ENCODE measurements at regions of chr16 and their contacts with region 1.

Region 1: GRCh38 chr16:24010440-24011089 is 174.8 kb downstream of the PRKCB start:
- DNase-seq: peak; percentile 91
- ATAC-seq: peak; percentile 26
- H3K4me3 ChIP-seq: peak overlapping the region in 1 of 5 experiments; percentile 30
- H3K4me3 Mint-ChIP-seq: peak overlapping the region; percentile 80
- H3K27ac ChIP-seq: peak overlapping the region; percentile 5 to 17
- H3K27ac Mint-ChIP-seq: peak overlapping the region; percentile 90
- H3K4me1 ChIP-seq: peaks cover 95 to 100% of the 10 kb centered on the region in 2 donors
- H3K4me1 Mint-ChIP-seq: peaks cover 97% of the 10 kb centered on the region
- H3K27me3 ChIP-seq: no peaks in the 10 kb centered on the region
- H3K27me3 Mint-ChIP-seq: no peaks in the 10 kb centered on the region
- CTCF ChIP-seq: peak; percentile 91

Region 2: GRCh38 chr16:23826528-23827045 is 184.0 kb before region 1 on chr16:
- CTCF ChIA-PET with region 1: interaction called, 15 read pairs
- POLR2A ChIA-PET with region 1: no interaction called
- intact Hi-C with region 1: no loop called
- DNase-seq: peak; percentile 84
- ATAC-seq: peak; percentile 91
- H3K4me3 ChIP-seq: peak overlapping the region in 3 of 5 experiments; percentile 10 to 34 (median 16)
- H3K4me3 Mint-ChIP-seq: peak overlapping the region; percentile 77
- H3K27ac ChIP-seq: peak overlapping the region; percentile 38 to 62
- H3K27ac Mint-ChIP-seq: peak overlapping the region; percentile 84
- H3K4me1 ChIP-seq: peaks cover 25 to 26% of the 10 kb centered on the region in 2 donors
- H3K4me1 Mint-ChIP-seq: peaks cover 28% of the 10 kb centered on the region
- H3K27me3 ChIP-seq: no peaks in the 10 kb centered on the region
- H3K27me3 Mint-ChIP-seq: no peaks in the 10 kb centered on the region
- CTCF ChIP-seq: no peak

Region 3: DNA sequence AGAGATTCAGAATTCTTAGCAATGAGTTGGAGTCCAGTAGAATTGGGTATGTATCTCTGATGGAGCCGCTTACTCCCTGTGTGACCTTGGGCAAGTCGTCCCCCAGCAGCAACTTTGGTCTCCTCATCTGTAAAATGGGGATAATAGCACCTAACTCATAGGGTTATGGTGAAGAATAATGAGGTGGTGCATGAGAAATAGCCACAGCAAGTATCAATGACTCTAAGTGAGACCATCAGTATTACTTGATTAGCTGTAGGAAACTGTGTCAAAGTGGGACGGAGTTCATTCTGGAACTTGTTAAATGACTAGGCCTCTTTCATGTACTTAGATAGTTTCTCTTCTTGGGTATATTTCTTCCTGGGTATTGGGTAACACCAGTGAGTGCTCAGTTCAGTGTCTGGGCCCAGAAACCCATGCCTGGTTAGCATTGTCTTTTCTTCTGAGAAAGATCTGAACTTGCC is 168.4 kb before region 1 on chr16:
- CTCF ChIA-PET with region 1: interaction called, 11 read pairs
- POLR2A ChIA-PET with region 1: interaction called, 3 read pairs
- intact Hi-C with region 1: no loop called
- DNase-seq: no peak
- ATAC-seq: no peak
- H3K4me3 ChIP-seq: no peak overlapping the region
- H3K4me3 Mint-ChIP-seq: peak overlapping the region; percentile 42
- H3K27ac ChIP-seq: peak overlapping the region; percentile 20 to 67
- H3K27ac Mint-ChIP-seq: peak overlapping the region; percentile 85
- H3K4me1 ChIP-seq: peaks cover 71 to 75% of the 10 kb centered on the region in 2 donors
- H3K4me1 Mint-ChIP-seq: peaks cover 79% of the 10 kb centered on the region
- H3K27me3 ChIP-seq: no peaks in the 10 kb centered on the region
- H3K27me3 Mint-ChIP-seq: no peaks in the 10 kb centered on the region
- CTCF ChIP-seq: no peak

Region 4: GRCh38 chr16:23877107-23878090 is 133.2 kb before region 1 on chr16:
- CTCF ChIA-PET with region 1: interaction called, 267 read pairs
- POLR2A ChIA-PET with region 1: interaction called, 23 read pairs
- intact Hi-C with region 1: loop called (anchors 1 kb)
- DNase-seq: peak; percentile 39
- ATAC-seq: peak; percentile 52
- H3K4me3 ChIP-seq: no peak overlapping the region
- H3K4me3 Mint-ChIP-seq: peak overlapping the region; percentile 2
- H3K27ac ChIP-seq: peak overlapping the region; percentile 34 to 77
- H3K27ac Mint-ChIP-seq: peak overlapping the region; percentile 93
- H3K4me1 ChIP-seq: peaks cover 82 to 94% of the 10 kb centered on the region in 2 donors
- H3K4me1 Mint-ChIP-seq: peaks cover 89% of the 10 kb centered on the region
- H3K27me3 ChIP-seq: no peaks in the 10 kb centered on the region
- H3K27me3 Mint-ChIP-seq: no peaks in the 10 kb centered on the region
- CTCF ChIP-seq: peak; percentile 34

Region 5: GRCh38 chr16:23959072-23959751 is 51.4 kb before region 1 on chr16:
- CTCF ChIA-PET with region 1: interaction called, 45 read pairs
- POLR2A ChIA-PET with region 1: interaction called, 9 read pairs
- intact Hi-C with region 1: no loop called
- DNase-seq: no peak
- ATAC-seq: peak; percentile 55
- H3K4me3 ChIP-seq: peak overlapping the region in 1 of 5 experiments; percentile 49
- H3K4me3 Mint-ChIP-seq: peak overlapping the region; percentile 59
- H3K27ac ChIP-seq: peak overlapping the region; percentile 79 to 88
- H3K27ac Mint-ChIP-seq: peak overlapping the region; percentile 87
- H3K4me1 ChIP-seq: peaks cover 81 to 84% of the 10 kb centered on the region in 2 donors
- H3K4me1 Mint-ChIP-seq: peaks cover 87% of the 10 kb centered on the region
- H3K27me3 ChIP-seq: no peaks in the 10 kb centered on the region
- H3K27me3 Mint-ChIP-seq: no peaks in the 10 kb centered on the region
- CTCF ChIP-seq: no peak

Region 6: GRCh38 chr16:23987443-23987842 is 23.1 kb before region 1 on chr16:
- CTCF ChIA-PET with region 1: interaction called, 25 read pairs
- POLR2A ChIA-PET with region 1: interaction called, 8 read pairs
- intact Hi-C with region 1: no loop called
- DNase-seq: peak; percentile 71
- ATAC-seq: peak; percentile 97
- H3K4me3 ChIP-seq: no peak overlapping the region
- H3K4me3 Mint-ChIP-seq: peak overlapping the region; percentile 56
- H3K27ac ChIP-seq: peak overlapping the region; percentile 3 to 65
- H3K27ac Mint-ChIP-seq: peak overlapping the region; percentile 64
- H3K4me1 ChIP-seq: peaks cover 18 to 20% of the 10 kb centered on the region in 2 donors
- H3K4me1 Mint-ChIP-seq: peaks cover 60% of the 10 kb centered on the region
- H3K27me3 ChIP-seq: no peaks in the 10 kb centered on the region
- H3K27me3 Mint-ChIP-seq: no peaks in the 10 kb centered on the region
- CTCF ChIP-seq: no peak

Region 7: DNA sequence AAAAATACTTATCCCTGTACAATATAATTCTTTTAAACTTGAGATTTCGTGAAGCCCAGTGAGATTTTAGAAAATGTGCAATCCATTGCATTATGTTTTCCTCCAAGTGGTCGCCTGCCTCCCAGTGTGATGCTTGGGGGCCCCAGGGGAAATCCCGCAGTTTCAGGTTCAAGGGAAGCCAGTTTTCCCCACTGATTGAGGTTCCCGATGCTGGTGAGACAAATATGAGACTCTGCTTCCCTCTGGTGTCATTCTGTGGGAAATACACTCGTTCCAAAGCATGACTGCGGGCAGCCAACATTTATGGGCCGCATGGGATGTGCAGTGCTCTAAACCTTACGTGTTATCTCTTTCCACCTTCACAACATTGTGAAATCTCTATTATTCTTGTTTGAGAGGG is 26.0 kb after region 1 on chr16:
- CTCF ChIA-PET with region 1: interaction called, 68 read pairs
- POLR2A ChIA-PET with region 1: interaction called, 4 read pairs
- intact Hi-C with region 1: loop called (anchors 1 kb)
- DNase-seq: peak; percentile 69
- ATAC-seq: peak; percentile 33
- H3K4me3 ChIP-seq: no peak overlapping the region
- H3K4me3 Mint-ChIP-seq: peak overlapping the region; percentile 59
- H3K27ac ChIP-seq: no peak overlapping the region
- H3K27ac Mint-ChIP-seq: peak overlapping the region; percentile 73
- H3K4me1 ChIP-seq: peaks cover 27 to 34% of the 10 kb centered on the region in 2 donors
- H3K4me1 Mint-ChIP-seq: peaks cover 54% of the 10 kb centered on the region
- H3K27me3 ChIP-seq: no peaks in the 10 kb centered on the region
- H3K27me3 Mint-ChIP-seq: no peaks in the 10 kb centered on the region
- CTCF ChIP-seq: peak; percentile 84

Region 8: GRCh38 chr16:24051125-24051524 is 40.6 kb after region 1 on chr16:
- CTCF ChIA-PET with region 1: no interaction called
- POLR2A ChIA-PET with region 1: no interaction called
- intact Hi-C with region 1: no loop called
- DNase-seq: no peak
- ATAC-seq: no peak
- H3K4me3 ChIP-seq: no peak overlapping the region
- H3K4me3 Mint-ChIP-seq: no peak overlapping the region
- H3K27ac ChIP-seq: no peak overlapping the region
- H3K27ac Mint-ChIP-seq: peak overlapping the region; percentile 48
- H3K4me1 ChIP-seq: no peaks in the 10 kb centered on the region
- H3K4me1 Mint-ChIP-seq: peaks cover 25% of the 10 kb centered on the region
- H3K27me3 ChIP-seq: no peaks in the 10 kb centered on the region
- H3K27me3 Mint-ChIP-seq: no peaks in the 10 kb centered on the region
- CTCF ChIP-seq: no peak

Region 9: DNA sequence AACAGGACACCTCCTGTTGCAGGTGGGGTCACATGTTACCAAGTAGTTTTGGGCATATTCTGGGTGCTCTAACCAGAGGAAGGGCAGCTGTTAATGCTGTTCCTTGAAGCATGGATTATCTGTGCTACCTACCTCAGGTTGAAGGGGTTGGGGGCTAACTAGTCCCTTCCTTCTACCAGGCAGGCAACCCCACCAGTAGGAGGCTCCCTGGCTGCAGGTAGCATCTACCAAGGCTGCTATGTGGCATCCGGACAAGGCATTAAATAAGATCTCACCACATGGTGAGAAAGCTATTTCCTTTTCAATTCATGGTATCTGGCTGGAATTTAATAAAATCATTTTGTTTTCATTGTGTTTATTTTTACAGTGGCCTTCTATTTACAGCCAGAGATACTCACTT is 308.1 kb after region 1 on chr16:
- CTCF ChIA-PET with region 1: no interaction called
- POLR2A ChIA-PET with region 1: no interaction called
- intact Hi-C with region 1: no loop called
- DNase-seq: no peak
- ATAC-seq: no peak
- H3K4me3 ChIP-seq: no peak overlapping the region
- H3K4me3 Mint-ChIP-seq: no peak overlapping the region
- H3K27ac ChIP-seq: no peak overlapping the region
- H3K27ac Mint-ChIP-seq: no peak overlapping the region
- H3K4me1 ChIP-seq: no peaks in the 10 kb centered on the region
- H3K4me1 Mint-ChIP-seq: no peaks in the 10 kb centered on the region
- H3K27me3 ChIP-seq: peaks cover 0 to 5% (median 3%) of the 10 kb centered on the region in 4 experiments
- H3K27me3 Mint-ChIP-seq: peaks cover 37% of the 10 kb centered on the region
- CTCF ChIP-seq: no peak

Measured in B cell (primary cell).